CD4-positive, alpha-beta T cell (primary cell): ENCODE measurements at regions of chr20 and their contacts with region 1.

Region 1: GRCh38 chr20:47379433-47380150 is 23.1 kb upstream of the ZMYND8 start:
- DNase-seq: no peak
- ATAC-seq: no peak
- H3K4me3 ChIP-seq: no peak overlapping the region
- H3K4me3 Mint-ChIP-seq: no peak overlapping the region
- H3K27ac ChIP-seq: no peak overlapping the region
- H3K27ac Mint-ChIP-seq: no peak overlapping the region
- H3K4me1 ChIP-seq: peaks cover 12% of the 10 kb centered on the region
- H3K4me1 Mint-ChIP-seq: peaks cover 6% of the 10 kb centered on the region
- H3K27me3 ChIP-seq: no peaks in the 10 kb centered on the region
- H3K27me3 Mint-ChIP-seq: no peaks in the 10 kb centered on the region
- CTCF ChIP-seq: no peak

Region 2: GRCh38 chr20:45647441-45648050 is 1732.0 kb before region 1 on chr20:
- CTCF ChIA-PET with region 1: no interaction called
- POLR2A ChIA-PET with region 1: no interaction called
- intact Hi-C with region 1: no loop called
- DNase-seq: no peak
- ATAC-seq: no peak
- H3K4me3 ChIP-seq: no peak overlapping the region
- H3K4me3 Mint-ChIP-seq: no peak overlapping the region
- H3K27ac ChIP-seq: no peak overlapping the region
- H3K27ac Mint-ChIP-seq: no peak overlapping the region
- H3K4me1 ChIP-seq: no peaks in the 10 kb centered on the region
- H3K4me1 Mint-ChIP-seq: no peaks in the 10 kb centered on the region
- H3K27me3 ChIP-seq: peaks cover 0 to 8% of the 10 kb centered on the region in 2 experiments
- H3K27me3 Mint-ChIP-seq: peaks cover 18% of the 10 kb centered on the region
- CTCF ChIP-seq: no peak

Region 3: DNA sequence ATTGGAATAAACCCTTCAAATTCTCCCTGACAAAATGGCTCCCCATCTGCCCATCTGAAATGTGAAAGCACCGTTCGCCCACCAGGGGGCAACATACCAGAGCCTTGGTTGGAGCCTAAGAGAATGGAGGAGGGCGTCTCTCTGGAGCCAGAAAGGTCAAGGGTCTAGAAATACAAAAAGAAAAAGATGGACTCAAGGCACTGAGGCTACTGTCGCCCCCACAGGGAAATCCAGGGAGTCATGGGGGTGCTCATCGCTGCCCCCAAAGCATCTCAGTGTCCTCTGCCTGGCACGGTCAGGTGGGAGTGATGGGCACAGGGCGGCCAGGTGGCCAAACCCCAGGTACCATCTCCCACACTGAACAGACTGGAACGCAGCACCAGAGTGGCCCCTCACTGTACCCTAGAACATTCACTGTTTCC is 159.4 kb before region 1 on chr20:
- CTCF ChIA-PET with region 1: interaction called, 5 read pairs
- POLR2A ChIA-PET with region 1: no interaction called
- intact Hi-C with region 1: loop called in 1 of 2 experiments (anchors 1 kb)
- DNase-seq: peak; percentile 10 to 61 (median 38)
- ATAC-seq: peak; percentile 46
- H3K4me3 ChIP-seq: no peak overlapping the region
- H3K4me3 Mint-ChIP-seq: no peak overlapping the region
- H3K27ac ChIP-seq: no peak overlapping the region
- H3K27ac Mint-ChIP-seq: peak overlapping the region; percentile 47
- H3K4me1 ChIP-seq: no peaks in the 10 kb centered on the region
- H3K4me1 Mint-ChIP-seq: peaks cover 15% of the 10 kb centered on the region
- H3K27me3 ChIP-seq: no peaks in the 10 kb centered on the region
- H3K27me3 Mint-ChIP-seq: no peaks in the 10 kb centered on the region
- CTCF ChIP-seq: peak; percentile 44

Region 4: GRCh38 chr20:47296950-47297349 is 82.6 kb before region 1 on chr20:
- CTCF ChIA-PET with region 1: interaction called, 13 read pairs
- POLR2A ChIA-PET with region 1: no interaction called
- intact Hi-C with region 1: no loop called
- DNase-seq: peak in 1 of 14 experiments; percentile 39
- ATAC-seq: no peak
- H3K4me3 ChIP-seq: no peak overlapping the region
- H3K4me3 Mint-ChIP-seq: no peak overlapping the region
- H3K27ac ChIP-seq: no peak overlapping the region
- H3K27ac Mint-ChIP-seq: peak overlapping the region; percentile 58
- H3K4me1 ChIP-seq: no peaks in the 10 kb centered on the region
- H3K4me1 Mint-ChIP-seq: peaks cover 7% of the 10 kb centered on the region
- H3K27me3 ChIP-seq: no peaks in the 10 kb centered on the region
- H3K27me3 Mint-ChIP-seq: no peaks in the 10 kb centered on the region
- CTCF ChIP-seq: no peak

Region 5: GRCh38 chr20:47356526-47357295 is 22.9 kb before region 1 on chr20 and contains the start of gene ZMYND8:
- CTCF ChIA-PET with region 1: interaction called, 28 read pairs
- POLR2A ChIA-PET with region 1: interaction called, 22 read pairs
- intact Hi-C with region 1: loop called in 1 of 2 experiments (anchors 2 kb)
- DNase-seq: peak; percentile 87 to 100 (median 95)
- ATAC-seq: peak; percentile 88
- H3K4me3 ChIP-seq: peak within 1 kb of the TSS; percentile 61
- H3K4me3 Mint-ChIP-seq: peak within 1 kb of the TSS; percentile 93
- H3K27ac ChIP-seq: peak within 1 kb of the TSS; percentile 83 to 85
- H3K27ac Mint-ChIP-seq: no peak within 1 kb of the TSS
- H3K4me1 ChIP-seq: peaks cover 74% of the 10 kb centered on the region
- H3K4me1 Mint-ChIP-seq: peaks cover 55% of the 10 kb centered on the region
- H3K27me3 ChIP-seq: no peaks in the 10 kb centered on the region
- H3K27me3 Mint-ChIP-seq: no peaks in the 10 kb centered on the region
- CTCF ChIP-seq: no peak
- total RNA-seq, gene ZMYND8: 33.0 to 34.3 TPM